ENCODE measurements at regions of chr1 and their contacts with region 1.

Region 1: DNA sequence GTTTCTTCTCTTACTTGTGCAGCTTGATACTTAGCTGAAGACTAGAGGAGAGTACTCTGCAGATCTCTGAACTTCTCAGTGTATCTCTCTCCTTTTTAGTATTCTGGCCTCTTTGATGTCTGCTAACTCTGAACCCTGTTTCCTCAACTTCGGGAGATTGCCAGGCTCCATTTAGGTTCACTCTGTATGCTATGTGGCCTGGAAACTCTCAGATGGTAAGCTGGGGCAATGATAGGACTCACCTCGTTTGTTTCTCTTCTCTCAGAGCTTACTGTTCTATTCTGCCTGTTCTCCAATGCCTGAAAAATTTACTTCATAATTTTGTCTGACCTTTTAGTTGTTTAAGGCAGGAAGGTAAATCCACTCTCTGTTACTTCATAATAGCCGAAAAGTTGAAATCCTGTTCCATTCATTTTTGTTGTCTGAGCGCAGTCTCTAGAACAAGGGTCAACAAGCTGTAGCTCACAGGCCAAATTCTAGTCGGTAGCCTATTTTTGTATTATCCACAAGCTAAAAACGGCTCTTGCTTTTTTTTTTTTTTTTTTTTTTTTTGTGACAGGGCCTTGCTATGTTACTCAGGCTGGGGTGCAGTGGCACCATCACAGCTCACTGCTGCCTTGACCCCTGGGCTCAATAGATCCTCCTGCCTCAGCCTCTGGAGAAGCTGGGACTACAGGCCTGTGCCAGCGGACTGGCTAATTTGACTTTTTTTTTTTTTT is 33.3 kb downstream of the ZMYM4 start:
- DNase-seq: no peak
- H3K4me3 ChIP-seq: no peak overlapping the region
- H3K27ac ChIP-seq: peak overlapping the region; percentile 63 to 75
- H3K4me1 ChIP-seq: peaks cover 0 to 38% (median 12%) of the 10 kb centered on the region in 4 donors
- H3K27me3 ChIP-seq: no peaks in the 10 kb centered on the region
- CTCF ChIP-seq: no peak

Region 2: DNA sequence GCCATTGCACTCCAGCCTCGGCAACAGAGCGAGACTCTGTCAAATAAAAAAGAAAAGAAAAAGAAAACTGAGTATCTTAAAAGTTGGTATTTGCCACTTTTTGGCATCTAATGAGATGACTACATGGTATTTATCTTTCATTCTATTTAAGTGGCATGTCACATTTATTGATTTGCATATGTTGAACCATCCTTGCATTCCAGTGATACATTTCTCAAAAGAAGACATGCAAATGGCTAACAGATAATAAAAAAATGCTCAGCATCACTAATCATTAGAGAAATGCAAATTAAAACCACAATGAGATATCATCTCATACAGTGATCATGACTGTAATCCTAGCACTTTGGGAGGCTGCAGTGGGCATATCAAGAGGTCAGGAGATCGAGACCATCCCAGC is 136.9 kb before region 1 on chr1:
- intact Hi-C with region 1: no loop called
- DNase-seq: no peak
- H3K4me3 ChIP-seq: no peak overlapping the region
- H3K27ac ChIP-seq: no peak overlapping the region
- H3K4me1 ChIP-seq: no peaks in the 10 kb centered on the region
- H3K27me3 ChIP-seq: no peaks in the 10 kb centered on the region
- CTCF ChIP-seq: no peak

Region 3: GRCh38 chr1:35202048-35202719 is 99.6 kb before region 1 on chr1:
- intact Hi-C with region 1: loop called (anchors 5 kb)
- DNase-seq: peak; percentile 64 to 77
- H3K4me3 ChIP-seq: no peak overlapping the region
- H3K27ac ChIP-seq: no peak overlapping the region
- H3K4me1 ChIP-seq: no peaks in the 10 kb centered on the region
- H3K27me3 ChIP-seq: no peaks in the 10 kb centered on the region
- CTCF ChIP-seq: peak; percentile 76 to 77

Region 4: DNA sequence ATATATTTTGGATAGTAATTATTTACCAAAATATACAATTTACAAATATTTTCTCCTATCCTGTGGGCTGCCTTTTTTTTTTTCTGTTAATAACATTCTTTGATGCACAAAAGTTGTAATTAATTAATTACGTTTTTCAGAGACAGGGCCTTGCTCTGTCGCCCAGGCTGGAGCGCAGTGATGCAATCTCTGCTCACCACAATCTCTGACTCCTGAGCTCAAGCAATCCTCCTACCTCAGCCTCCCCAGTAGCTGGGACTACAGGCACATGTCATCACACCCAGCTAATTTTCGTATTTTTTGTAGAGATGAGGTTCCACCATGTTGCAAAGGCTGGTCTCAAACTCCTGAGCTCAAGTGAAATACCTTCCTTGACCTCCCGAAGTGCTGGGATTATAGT is 54.6 kb before region 1 on chr1:
- intact Hi-C with region 1: no loop called
- DNase-seq: no peak
- H3K4me3 ChIP-seq: no peak overlapping the region
- H3K27ac ChIP-seq: no peak overlapping the region
- H3K4me1 ChIP-seq: no peaks in the 10 kb centered on the region
- H3K27me3 ChIP-seq: no peaks in the 10 kb centered on the region
- CTCF ChIP-seq: no peak

Region 5: DNA sequence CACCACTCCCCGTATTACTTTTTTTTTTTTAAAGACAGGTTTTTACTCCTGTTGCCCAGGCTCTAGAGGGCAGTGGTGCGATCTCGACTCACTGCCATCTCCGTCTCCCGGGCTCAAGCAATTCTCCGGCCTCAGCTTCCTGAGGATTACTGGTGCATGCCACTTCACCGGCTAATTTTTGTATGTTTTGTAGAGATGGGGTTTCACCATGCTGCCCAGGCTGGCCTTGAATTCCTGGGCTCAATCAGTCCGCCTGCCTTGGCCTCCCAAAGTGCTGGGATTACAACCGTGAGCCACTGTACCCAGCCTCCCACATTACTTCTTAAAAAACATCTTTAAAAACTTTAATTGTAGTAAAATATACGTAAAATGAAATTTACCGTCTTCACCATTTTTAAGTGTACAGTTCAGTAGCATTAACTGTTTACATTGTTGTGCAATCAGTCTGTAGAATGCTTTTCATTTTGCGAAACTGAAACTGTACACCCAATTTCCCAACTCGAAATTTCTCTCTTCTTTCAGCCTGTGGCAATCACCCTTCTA is 43.7 kb after region 1 on chr1:
- intact Hi-C with region 1: no loop called
- DNase-seq: no peak
- H3K4me3 ChIP-seq: no peak overlapping the region
- H3K27ac ChIP-seq: no peak overlapping the region
- H3K4me1 ChIP-seq: peaks cover 0 to 8% (median 0%) of the 10 kb centered on the region in 4 donors
- H3K27me3 ChIP-seq: no peaks in the 10 kb centered on the region
- CTCF ChIP-seq: no peak

Region 6: DNA sequence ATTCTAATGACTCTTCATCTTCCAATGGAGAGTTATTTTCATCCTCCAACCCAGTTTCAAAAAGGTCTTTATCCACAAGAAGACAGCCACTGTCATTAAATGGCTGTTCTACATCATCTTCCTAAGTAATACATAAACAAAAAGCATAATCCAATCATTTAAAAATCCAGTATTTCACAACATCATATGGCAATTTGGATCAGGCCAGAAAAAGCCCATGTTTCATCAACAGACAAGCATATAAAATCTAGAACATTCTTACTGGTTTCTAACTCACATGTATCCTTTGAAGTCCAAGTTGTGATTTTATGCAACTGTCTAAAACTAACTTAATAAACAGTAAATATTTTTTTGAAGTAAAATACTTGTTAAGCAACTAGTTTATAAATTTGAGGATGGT is 461.4 kb after region 1 on chr1:
- intact Hi-C with region 1: no loop called
- DNase-seq: no peak
- H3K4me3 ChIP-seq: no peak overlapping the region
- H3K27ac ChIP-seq: no peak overlapping the region
- H3K4me1 ChIP-seq: no peaks in the 10 kb centered on the region
- H3K27me3 ChIP-seq: no peaks in the 10 kb centered on the region
- CTCF ChIP-seq: no peak